WTC11 (cell line): ENCODE measurements at regions of chr16 and their contacts with region 1.

Region 1: DNA sequence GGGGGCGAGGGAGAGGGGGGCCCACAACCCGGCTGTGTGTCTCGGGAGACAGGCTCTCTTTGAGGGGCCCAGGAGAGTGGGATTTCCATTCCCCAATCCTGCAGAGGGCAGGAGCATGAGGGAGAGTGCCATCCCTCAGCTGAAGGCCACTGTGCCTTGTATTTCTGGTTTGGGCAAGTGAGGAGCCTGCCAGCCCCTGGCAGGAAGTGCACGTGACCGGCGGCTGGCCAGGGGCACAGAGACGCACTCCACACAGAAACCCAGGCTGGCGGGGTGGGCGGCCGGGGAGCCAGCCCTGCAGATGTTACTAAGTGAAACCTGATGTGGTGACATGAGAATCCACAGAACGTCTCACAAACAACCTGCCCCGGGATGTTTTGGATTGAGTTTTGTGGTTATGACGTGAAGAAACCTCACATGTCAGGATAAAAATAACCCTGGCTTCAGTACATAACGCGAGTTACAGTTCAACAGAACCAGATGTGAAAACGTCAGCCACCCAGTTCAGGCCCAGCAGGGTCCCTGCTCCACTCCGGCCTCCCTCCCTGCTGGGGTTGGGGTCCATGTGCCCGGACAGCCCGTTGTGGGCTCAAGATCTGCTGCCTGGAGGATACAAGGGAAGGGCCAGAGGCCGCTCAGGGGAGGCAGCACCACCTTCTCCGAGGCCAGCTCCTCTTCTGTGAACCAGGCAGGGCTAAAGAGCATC is 51.7 kb upstream of the MTSS2 start:
- DNase-seq: no peak
- ATAC-seq: no peak
- H3K4me3 Mint-ChIP-seq: no peak overlapping the region
- H3K27ac Mint-ChIP-seq: no peak overlapping the region; the same call in 1 of the 2 replicates
- H3K4me1 Mint-ChIP-seq: peaks cover 21% of the 10 kb centered on the region
- H3K27me3 Mint-ChIP-seq: no peaks in the 10 kb centered on the region
- CTCF ChIP-seq: no peak

Region 2: DNA sequence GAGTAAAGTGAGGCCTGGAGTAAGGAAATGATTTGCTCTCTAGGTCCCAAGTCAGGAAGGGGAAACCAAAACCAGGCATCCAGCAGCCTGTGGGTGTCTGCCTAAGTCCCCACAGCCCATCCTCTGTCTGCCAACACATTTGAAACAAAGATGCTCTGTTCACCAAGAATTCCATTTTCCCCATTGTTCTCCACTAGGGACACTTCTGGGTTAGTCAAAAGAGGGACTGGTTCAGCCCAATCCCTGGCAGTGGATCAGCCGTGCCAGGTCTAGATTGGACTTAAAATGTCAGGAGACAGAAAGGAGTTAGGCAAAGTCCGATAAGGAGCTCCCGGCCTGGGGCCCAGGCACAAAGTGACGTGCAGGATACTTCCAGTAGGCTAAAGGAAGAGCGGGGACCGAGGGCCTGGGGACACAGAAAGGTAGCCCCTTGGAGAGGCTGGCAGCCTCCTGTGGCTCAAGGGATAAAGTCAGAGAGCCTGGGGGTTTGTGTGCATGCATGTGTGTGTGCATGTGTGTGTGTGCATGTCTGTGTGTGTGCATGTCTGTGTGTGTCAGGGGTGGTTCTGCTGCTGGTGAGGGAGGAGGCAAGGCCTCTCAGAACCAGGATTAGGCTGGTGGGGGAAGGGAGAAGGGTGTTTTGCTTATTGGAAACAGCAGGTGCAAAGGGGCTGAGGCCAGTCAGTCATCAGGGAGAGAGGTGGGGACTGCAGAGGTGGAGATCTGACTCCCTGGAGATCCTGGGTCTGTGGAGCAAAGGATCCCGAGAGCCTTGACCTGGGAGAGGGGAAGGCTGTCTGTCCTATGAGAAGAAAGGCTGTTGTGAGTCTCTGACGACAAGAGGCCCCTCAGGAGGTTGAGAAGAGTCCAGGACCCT is 132.9 kb before region 1 on chr16:
- CTCF ChIA-PET with region 1: no interaction called
- POLR2A ChIA-PET with region 1: no interaction called
- DNase-seq: no peak
- ATAC-seq: peak; percentile 22; the same call in 1 of the 2 replicates
- H3K4me3 Mint-ChIP-seq: no peak overlapping the region
- H3K27ac Mint-ChIP-seq: no peak overlapping the region
- H3K4me1 Mint-ChIP-seq: peaks cover 3% of the 10 kb centered on the region
- H3K27me3 Mint-ChIP-seq: peaks cover 35% of the 10 kb centered on the region
- CTCF ChIP-seq: no peak

Region 3: GRCh38 chr16:70685938-70686375 is 51.6 kb before region 1 on chr16 and contains the start of gene MTSS2:
- CTCF ChIA-PET with region 1: interaction called, 91 read pairs
- POLR2A ChIA-PET with region 1: interaction called, 4 read pairs
- DNase-seq: peak; percentile 82
- ATAC-seq: peak; percentile 55
- H3K4me3 Mint-ChIP-seq: peak within 1 kb of the TSS; percentile 65
- H3K27ac Mint-ChIP-seq: peak within 1 kb of the TSS; percentile 70
- H3K4me1 Mint-ChIP-seq: peaks cover 26% of the 10 kb centered on the region
- H3K27me3 Mint-ChIP-seq: no peaks in the 10 kb centered on the region
- CTCF ChIP-seq: no peak
- total RNA-seq, gene MTSS2: 28.3 to 34.9 TPM (median 31.2 TPM) in 3 replicates

Region 4: DNA sequence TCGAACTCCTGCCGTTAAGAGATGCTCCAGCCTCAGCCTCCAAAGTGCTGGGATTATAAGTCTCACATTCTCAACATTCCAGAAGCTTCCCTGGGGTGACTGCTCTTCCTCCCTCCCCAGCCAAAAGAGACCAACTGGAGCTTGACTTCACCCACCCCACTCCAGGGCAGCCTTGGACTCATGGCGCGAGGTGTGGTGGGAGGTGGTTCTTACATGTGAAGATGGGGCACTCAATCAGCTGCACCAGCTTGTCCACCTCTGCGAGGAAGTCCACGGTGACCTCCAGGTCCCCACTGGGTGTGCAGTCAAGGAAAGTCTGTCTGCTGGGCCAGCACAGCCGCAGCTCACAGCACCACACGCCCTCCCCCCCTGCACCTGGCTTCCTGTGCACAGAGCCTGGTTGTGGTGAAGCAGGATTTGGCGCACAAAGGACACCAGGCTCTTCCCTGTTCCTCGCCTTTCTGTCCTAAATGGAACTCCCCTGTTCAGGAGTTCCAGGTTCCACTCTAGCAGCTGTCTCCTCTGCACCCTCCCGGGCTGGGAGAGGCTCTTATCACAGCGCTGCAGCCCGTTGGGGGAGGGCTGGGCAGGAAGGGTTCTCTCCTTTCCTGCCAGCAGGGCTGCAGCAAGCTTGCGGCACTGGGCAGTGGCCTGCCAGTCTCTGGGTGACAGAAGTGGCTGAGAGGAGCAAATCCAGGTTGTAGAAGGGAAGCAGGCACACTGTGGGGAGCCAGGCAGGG is 42.0 kb before region 1 on chr16:
- CTCF ChIA-PET with region 1: interaction called, 15 read pairs
- POLR2A ChIA-PET with region 1: no interaction called
- DNase-seq: no peak
- ATAC-seq: peak; percentile 10
- H3K4me3 Mint-ChIP-seq: no peak overlapping the region; the same call in 1 of the 2 replicates
- H3K27ac Mint-ChIP-seq: peak overlapping the region; percentile 95
- H3K4me1 Mint-ChIP-seq: peaks cover 24% of the 10 kb centered on the region
- H3K27me3 Mint-ChIP-seq: no peaks in the 10 kb centered on the region
- CTCF ChIP-seq: no peak

Region 5: GRCh38 chr16:70703041-70703834 is 34.3 kb before region 1 on chr16:
- CTCF ChIA-PET with region 1: interaction called, 18 read pairs
- POLR2A ChIA-PET with region 1: no interaction called
- DNase-seq: peak; percentile 45
- ATAC-seq: peak; percentile 67
- H3K4me3 Mint-ChIP-seq: no peak overlapping the region
- H3K27ac Mint-ChIP-seq: peak overlapping the region; percentile 45; the same call in 1 of the 2 replicates
- H3K4me1 Mint-ChIP-seq: peaks cover 18% of the 10 kb centered on the region
- H3K27me3 Mint-ChIP-seq: no peaks in the 10 kb centered on the region
- CTCF ChIP-seq: no peak

Region 6: DNA sequence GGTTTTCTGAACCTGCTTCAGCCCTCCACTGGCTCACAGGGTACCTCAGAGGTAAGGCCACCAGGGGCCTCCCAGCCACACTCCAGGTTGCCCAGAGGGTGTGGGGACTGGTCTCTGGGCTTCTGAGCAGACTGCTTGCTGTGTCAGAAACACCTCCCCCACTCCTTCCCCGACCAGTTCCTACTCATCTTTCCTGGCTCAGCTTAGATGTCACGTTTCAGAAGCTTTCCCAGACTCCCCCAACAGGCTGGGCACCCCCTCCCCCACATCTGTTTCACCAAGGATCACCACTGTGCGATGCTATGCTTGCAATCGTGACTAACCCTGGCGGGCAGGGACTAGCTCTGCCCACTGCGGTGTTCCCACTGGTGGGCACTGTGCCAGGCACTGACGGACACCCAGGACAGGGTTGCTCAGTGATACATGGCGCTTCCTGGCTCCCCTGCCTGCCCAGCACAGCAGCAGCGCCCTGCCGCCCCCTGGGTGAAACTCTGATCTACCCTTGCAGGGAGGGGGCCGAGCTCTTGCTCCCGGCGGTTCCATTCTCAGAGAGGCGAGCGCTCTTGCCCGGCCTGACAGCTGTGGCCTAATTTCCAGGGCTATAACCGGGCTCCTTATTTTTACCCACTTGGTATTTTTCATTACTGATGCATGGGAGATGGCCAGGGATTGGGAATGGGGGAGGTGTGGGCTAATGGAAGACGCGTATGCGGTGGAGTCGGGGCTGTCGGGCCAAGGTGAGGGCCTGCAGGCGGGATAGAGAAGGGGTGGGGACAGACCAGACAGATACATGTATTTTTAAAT is 22.3 kb before region 1 on chr16:
- CTCF ChIA-PET with region 1: interaction called, 13 read pairs
- POLR2A ChIA-PET with region 1: interaction called, 4 read pairs
- DNase-seq: no peak
- ATAC-seq: peak; percentile 46
- H3K4me3 Mint-ChIP-seq: no peak overlapping the region
- H3K27ac Mint-ChIP-seq: no peak overlapping the region; the same call in 1 of the 2 replicates
- H3K4me1 Mint-ChIP-seq: peaks cover 48% of the 10 kb centered on the region
- H3K27me3 Mint-ChIP-seq: no peaks in the 10 kb centered on the region
- CTCF ChIP-seq: no peak

Region 7: GRCh38 chr16:70750893-70751475 is 13.5 kb after region 1 on chr16:
- CTCF ChIA-PET with region 1: interaction called, 13 read pairs
- POLR2A ChIA-PET with region 1: interaction called, 3 read pairs
- DNase-seq: no peak
- ATAC-seq: no peak
- H3K4me3 Mint-ChIP-seq: no peak overlapping the region
- H3K27ac Mint-ChIP-seq: no peak overlapping the region
- H3K4me1 Mint-ChIP-seq: peaks cover 13% of the 10 kb centered on the region
- H3K27me3 Mint-ChIP-seq: no peaks in the 10 kb centered on the region
- CTCF ChIP-seq: no peak